Gastrocnemius medialis (tissue), 4 donors: ENCODE measurements at regions of chr1 and their contacts with region 1.

Region 1: GRCh38 chr1:32521165-32521564 is 18.1 kb upstream of the ZBTB8A start:
- DNase-seq: no peak
- ATAC-seq: no peak
- H3K4me3 ChIP-seq: peak overlapping the region in 1 of 4 donors; percentile 52
- H3K27ac ChIP-seq: no peak overlapping the region
- H3K4me1 ChIP-seq: peaks cover 0 to 4% of the 10 kb centered on the region in 2 donors
- H3K27me3 ChIP-seq: no peaks in the 10 kb centered on the region
- CTCF ChIP-seq: no peak
- POLR2A ChIP-seq: no peak

Region 2: DNA sequence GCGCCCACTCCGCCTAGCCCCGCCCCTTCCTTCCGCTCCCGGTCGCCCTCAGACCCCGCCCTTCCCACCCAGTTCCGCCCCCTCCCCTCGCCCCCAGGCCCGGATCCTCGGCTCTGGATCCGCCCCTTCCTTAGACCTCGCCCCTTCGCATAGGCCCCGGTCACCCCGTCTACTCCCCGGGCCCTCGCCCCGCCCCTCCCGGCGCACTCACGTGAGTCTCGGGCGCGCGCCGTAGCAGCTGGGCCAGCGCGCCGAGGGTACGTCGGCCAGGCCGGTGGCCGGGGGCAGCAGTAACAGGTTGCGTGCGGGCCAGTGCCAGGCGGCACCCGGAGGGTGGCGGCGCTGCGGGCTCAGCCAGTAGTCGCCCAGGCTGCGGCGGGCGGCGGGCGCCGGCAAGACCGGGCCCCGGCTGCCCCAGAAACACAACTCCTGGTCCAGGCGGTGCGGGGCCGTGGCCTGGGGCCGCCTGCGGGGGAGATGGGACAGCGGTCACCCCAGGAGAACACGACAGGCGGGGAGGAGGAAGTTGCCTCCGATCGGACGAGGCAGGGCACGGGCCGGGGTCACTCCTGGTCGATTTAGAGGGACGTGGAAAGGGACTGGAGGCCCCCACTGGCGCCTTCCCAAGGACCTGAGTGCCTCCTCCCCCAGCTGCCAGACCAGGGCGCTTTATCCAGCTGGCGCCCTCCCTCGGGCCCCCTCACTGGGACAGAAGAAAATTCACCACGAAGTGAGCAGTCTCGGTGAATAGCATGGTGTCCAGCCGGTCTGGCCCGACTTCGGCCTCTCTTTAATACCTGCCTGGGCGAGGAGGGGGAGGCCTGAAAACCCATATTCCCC is 169.5 kb before region 1 on chr1:
- in situ Hi-C with region 1: no loop called
- intact Hi-C with region 1: no loop called
- DNase-seq: peak; percentile 94 to 95
- ATAC-seq: peak; percentile 86 to 90
- H3K4me3 ChIP-seq: peak overlapping the region; percentile 65 to 87 (median 78)
- H3K27ac ChIP-seq: peak overlapping the region; percentile 82 to 95 (median 93)
- H3K4me1 ChIP-seq: peaks cover 19 to 24% of the 10 kb centered on the region in 2 donors
- H3K27me3 ChIP-seq: no peaks in the 10 kb centered on the region
- CTCF ChIP-seq: peak in 2 of 5 experiments; percentile 4 to 44
- POLR2A ChIP-seq: peak; percentile 97 to 98

Region 3: GRCh38 chr1:32612189-32612881 is 91.2 kb after region 1 on chr1:
- in situ Hi-C with region 1: no loop called
- intact Hi-C with region 1: loop called (anchors 10 kb)
- DNase-seq: peak; percentile 85 to 93
- ATAC-seq: peak; percentile 97 to 98
- H3K4me3 ChIP-seq: peak overlapping the region; percentile 55 to 63 (median 58)
- H3K27ac ChIP-seq: peak overlapping the region; percentile 57 to 82 (median 75)
- H3K4me1 ChIP-seq: peaks cover 0 to 4% of the 10 kb centered on the region in 2 donors
- H3K27me3 ChIP-seq: no peaks in the 10 kb centered on the region
- CTCF ChIP-seq: peak in 4 of 5 experiments; percentile 12 to 42 (median 28)
- POLR2A ChIP-seq: peak; percentile 41 to 53

Region 4: DNA sequence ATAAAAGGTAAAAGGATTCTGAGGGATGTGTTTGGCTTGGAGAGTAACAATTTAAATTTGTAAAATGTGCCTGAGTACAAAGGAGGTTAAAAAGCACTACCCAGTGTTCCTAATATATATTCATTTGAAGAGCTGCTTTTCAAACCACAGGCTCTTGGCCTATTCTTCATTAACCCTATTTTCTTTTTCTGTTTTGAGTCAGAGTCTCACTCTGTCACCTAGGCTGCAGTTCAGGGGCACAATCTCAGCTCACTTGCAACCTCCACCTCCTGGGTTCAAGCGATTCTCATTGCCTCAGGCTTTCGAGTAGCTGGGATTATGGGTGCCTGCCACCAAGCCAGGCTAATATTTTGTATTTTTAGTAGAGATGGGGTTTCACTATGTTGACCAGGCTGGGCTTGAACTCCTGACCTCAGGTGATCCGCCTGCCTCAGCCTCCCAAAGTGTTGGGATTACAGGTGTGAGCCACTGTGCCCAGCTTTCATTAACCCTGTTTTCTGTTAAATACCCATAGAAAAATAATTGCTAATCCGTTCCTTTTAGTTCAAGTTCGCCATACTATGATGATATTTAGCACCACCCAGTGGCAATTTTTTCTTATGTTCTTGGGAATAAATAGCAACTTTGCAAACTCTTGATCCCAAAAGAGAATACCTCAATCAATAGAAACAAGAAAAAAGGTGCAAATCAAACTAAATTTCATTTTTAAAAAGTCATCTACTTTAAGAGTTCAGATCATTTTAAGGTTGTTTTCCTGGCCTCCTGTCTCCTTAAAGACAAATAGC is 98.7 kb after region 1 on chr1:
- in situ Hi-C with region 1: loop called in 1 of 4 experiments (anchors 10 kb)
- intact Hi-C with region 1: loop called (anchors 10 kb)
- DNase-seq: no peak
- ATAC-seq: no peak
- H3K4me3 ChIP-seq: no peak overlapping the region
- H3K27ac ChIP-seq: no peak overlapping the region
- H3K4me1 ChIP-seq: no peaks in the 10 kb centered on the region
- H3K27me3 ChIP-seq: no peaks in the 10 kb centered on the region
- CTCF ChIP-seq: peak in 1 of 5 experiments; percentile 25
- POLR2A ChIP-seq: no peak

Region 5: GRCh38 chr1:32773018-32773763 is 252.0 kb after region 1 on chr1:
- in situ Hi-C with region 1: loop called in 1 of 4 experiments (anchors 10 kb)
- intact Hi-C with region 1: loop called (anchors 2 kb)
- DNase-seq: peak; percentile 61 to 84
- ATAC-seq: peak; percentile 81 to 89
- H3K4me3 ChIP-seq: no peak overlapping the region
- H3K27ac ChIP-seq: peak overlapping the region in 1 of 4 donors; percentile 21
- H3K4me1 ChIP-seq: peaks cover 0 to 5% of the 10 kb centered on the region in 2 donors
- H3K27me3 ChIP-seq: no peaks in the 10 kb centered on the region
- CTCF ChIP-seq: peak; percentile 83 to 96 (median 91)
- POLR2A ChIP-seq: no peak